Vagina (tissue), 2 donors: ENCODE measurements at regions of chr11 and their contacts with region 1.

Region 1: GRCh38 chr11:66459138-66459778 is 7.4 kb upstream of the PELI3 start:
- DNase-seq: no peak
- H3K4me3 ChIP-seq: no peak overlapping the region
- H3K27ac ChIP-seq: no peak overlapping the region
- H3K4me1 ChIP-seq: no peaks in the 10 kb centered on the region
- H3K27me3 ChIP-seq: no peaks in the 10 kb centered on the region
- CTCF ChIP-seq: no peak
- POLR2A ChIP-seq: no peak

Region 2: GRCh38 chr11:66530927-66531709 is 71.9 kb after region 1 on chr11:
- intact Hi-C with region 1: loop called (anchors 10 kb)
- DNase-seq: no peak
- H3K4me3 ChIP-seq: no peak overlapping the region
- H3K27ac ChIP-seq: no peak overlapping the region
- H3K4me1 ChIP-seq: no peaks in the 10 kb centered on the region
- H3K27me3 ChIP-seq: no peaks in the 10 kb centered on the region
- CTCF ChIP-seq: no peak
- POLR2A ChIP-seq: no peak